Naive thymus-derived CD4-positive, alpha-beta T cell (primary cell): ENCODE measurements at regions of chr7 and their contacts with region 1.

Region 1: GRCh38 chr7:132049462-132050304 is 493.3 kb upstream of the PODXL start:
- DNase-seq: peak in 2 of 9 donors; percentile 2 to 25
- ATAC-seq: no peak
- H3K4me3 ChIP-seq: no peak overlapping the region
- H3K4me3 Mint-ChIP-seq: no peak overlapping the region
- H3K27ac ChIP-seq: no peak overlapping the region
- H3K27ac Mint-ChIP-seq: no peak overlapping the region
- H3K4me1 ChIP-seq: no peaks in the 10 kb centered on the region
- H3K4me1 Mint-ChIP-seq: no peaks in the 10 kb centered on the region
- H3K27me3 ChIP-seq: no peaks in the 10 kb centered on the region
- H3K27me3 Mint-ChIP-seq: peaks cover 8 to 31% (median 14%) of the 10 kb centered on the region in 5 donors

Region 2: GRCh38 chr7:131244259-131244852 is 805.3 kb before region 1 on chr7:
- CTCF ChIA-PET with region 1: no interaction called
- POLR2A ChIA-PET with region 1: no interaction called
- intact Hi-C with region 1: no loop called
- DNase-seq: no peak
- ATAC-seq: no peak
- H3K4me3 ChIP-seq: no peak overlapping the region
- H3K4me3 Mint-ChIP-seq: no peak overlapping the region
- H3K27ac ChIP-seq: no peak overlapping the region
- H3K27ac Mint-ChIP-seq: peak overlapping the region in 1 of 9 donors; percentile 59
- H3K4me1 ChIP-seq: no peaks in the 10 kb centered on the region
- H3K4me1 Mint-ChIP-seq: no peaks in the 10 kb centered on the region
- H3K27me3 ChIP-seq: no peaks in the 10 kb centered on the region
- H3K27me3 Mint-ChIP-seq: peaks cover 0 to 6% (median 2%) of the 10 kb centered on the region in 5 donors

Region 3: DNA sequence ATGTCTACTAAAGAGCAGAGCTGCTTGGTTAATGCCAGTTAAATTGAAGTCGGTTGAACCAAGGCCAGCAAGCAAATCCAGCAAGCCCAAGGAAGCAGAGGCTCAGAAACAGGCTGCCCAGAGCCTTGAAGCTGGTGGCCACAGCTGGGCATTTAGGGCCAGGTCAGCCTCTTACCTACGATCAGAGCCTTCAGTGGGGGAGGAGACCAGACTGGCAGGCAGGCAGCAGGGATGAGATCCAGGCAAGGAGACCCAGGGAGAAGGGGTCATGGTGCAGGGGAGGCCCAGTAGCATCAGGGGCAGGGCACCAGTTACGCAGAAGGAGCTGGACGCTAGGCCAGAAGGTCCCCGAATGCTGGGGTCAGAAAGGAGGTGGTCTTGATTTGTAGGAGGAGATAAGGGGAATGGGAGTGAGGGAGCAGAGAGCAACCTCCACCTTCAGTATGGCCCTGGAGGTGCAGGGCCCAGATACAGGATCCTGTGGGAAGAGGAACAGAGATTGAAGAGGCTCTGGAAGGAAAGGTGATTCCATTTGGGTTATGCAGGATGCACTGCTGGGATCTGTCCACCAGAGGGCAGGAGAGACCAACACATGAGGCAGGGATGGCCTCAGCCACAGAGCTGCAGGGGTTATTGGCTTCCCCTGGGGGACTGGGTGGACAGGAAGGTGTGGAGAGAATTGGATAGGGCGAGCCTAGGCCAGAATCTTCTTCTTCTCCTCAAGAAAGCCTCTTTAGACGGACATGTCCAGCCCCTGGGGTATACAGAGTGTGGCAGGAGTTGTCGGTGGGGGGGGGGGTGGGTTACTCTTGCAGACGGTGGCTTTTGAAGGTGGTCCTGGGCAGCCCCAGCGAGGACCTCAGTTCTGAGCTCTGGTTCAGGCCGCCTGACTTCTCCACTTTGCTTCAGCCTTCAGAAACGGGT is 360.7 kb before region 1 on chr7:
- CTCF ChIA-PET with region 1: no interaction called
- POLR2A ChIA-PET with region 1: no interaction called
- intact Hi-C with region 1: loop called in 1 of 2 experiments (anchors 2 kb)
- DNase-seq: peak in 7 of 9 donors; percentile 23 to 57 (median 42)
- ATAC-seq: peak; percentile 80
- H3K4me3 ChIP-seq: no peak overlapping the region
- H3K4me3 Mint-ChIP-seq: no peak overlapping the region
- H3K27ac ChIP-seq: no peak overlapping the region
- H3K27ac Mint-ChIP-seq: peak overlapping the region in 1 of 9 donors; percentile 33
- H3K4me1 ChIP-seq: no peaks in the 10 kb centered on the region
- H3K4me1 Mint-ChIP-seq: peaks cover 0 to 7% (median 0%) of the 10 kb centered on the region in 7 donors
- H3K27me3 ChIP-seq: no peaks in the 10 kb centered on the region
- H3K27me3 Mint-ChIP-seq: peaks cover 6 to 62% (median 49%) of the 10 kb centered on the region in 5 donors

Region 4: GRCh38 chr7:131945313-131945911 is 104.3 kb before region 1 on chr7:
- CTCF ChIA-PET with region 1: no interaction called
- POLR2A ChIA-PET with region 1: no interaction called
- intact Hi-C with region 1: loop called in 1 of 2 experiments (anchors 10 kb)
- DNase-seq: peak in 2 of 9 donors; percentile 1 to 59
- ATAC-seq: peak; percentile 32
- H3K4me3 ChIP-seq: no peak overlapping the region
- H3K4me3 Mint-ChIP-seq: no peak overlapping the region
- H3K27ac ChIP-seq: no peak overlapping the region
- H3K27ac Mint-ChIP-seq: no peak overlapping the region
- H3K4me1 ChIP-seq: no peaks in the 10 kb centered on the region
- H3K4me1 Mint-ChIP-seq: peaks cover 0 to 4% (median 0%) of the 10 kb centered on the region in 7 donors
- H3K27me3 ChIP-seq: no peaks in the 10 kb centered on the region
- H3K27me3 Mint-ChIP-seq: peaks cover 13 to 58% (median 49%) of the 10 kb centered on the region in 5 donors